ENCODE measurements at regions of chr9 and their contacts with region 1.

Region 1: GRCh38 chr9:33816327-33817252 is at the start of gene UBE2R2:
- DNase-seq: peak; percentile 85
- ATAC-seq: peak; percentile 54
- H3K4me3 ChIP-seq: peak within 1 kb of the TSS; percentile 79
- H3K27ac ChIP-seq: peak within 1 kb of the TSS; percentile 96
- H3K4me1 ChIP-seq: peaks cover 37% of the 10 kb centered on the region
- H3K27me3 ChIP-seq: no peaks in the 10 kb centered on the region
- CTCF ChIP-seq: no peak
- total RNA-seq, gene UBE2R2: 18.4 and 20.9 TPM in 2 replicates

Region 2: GRCh38 chr9:32618261-32618660 is 1198.3 kb before region 1 on chr9:
- CTCF ChIA-PET with region 1: no interaction called
- POLR2A ChIA-PET with region 1: no interaction called
- intact Hi-C with region 1: no loop called
- DNase-seq: no peak
- ATAC-seq: no peak
- H3K4me3 ChIP-seq: no peak overlapping the region
- H3K27ac ChIP-seq: no peak overlapping the region
- H3K4me1 ChIP-seq: no peaks in the 10 kb centered on the region
- H3K27me3 ChIP-seq: peaks cover 33% of the 10 kb centered on the region
- CTCF ChIP-seq: no peak

Region 3: DNA sequence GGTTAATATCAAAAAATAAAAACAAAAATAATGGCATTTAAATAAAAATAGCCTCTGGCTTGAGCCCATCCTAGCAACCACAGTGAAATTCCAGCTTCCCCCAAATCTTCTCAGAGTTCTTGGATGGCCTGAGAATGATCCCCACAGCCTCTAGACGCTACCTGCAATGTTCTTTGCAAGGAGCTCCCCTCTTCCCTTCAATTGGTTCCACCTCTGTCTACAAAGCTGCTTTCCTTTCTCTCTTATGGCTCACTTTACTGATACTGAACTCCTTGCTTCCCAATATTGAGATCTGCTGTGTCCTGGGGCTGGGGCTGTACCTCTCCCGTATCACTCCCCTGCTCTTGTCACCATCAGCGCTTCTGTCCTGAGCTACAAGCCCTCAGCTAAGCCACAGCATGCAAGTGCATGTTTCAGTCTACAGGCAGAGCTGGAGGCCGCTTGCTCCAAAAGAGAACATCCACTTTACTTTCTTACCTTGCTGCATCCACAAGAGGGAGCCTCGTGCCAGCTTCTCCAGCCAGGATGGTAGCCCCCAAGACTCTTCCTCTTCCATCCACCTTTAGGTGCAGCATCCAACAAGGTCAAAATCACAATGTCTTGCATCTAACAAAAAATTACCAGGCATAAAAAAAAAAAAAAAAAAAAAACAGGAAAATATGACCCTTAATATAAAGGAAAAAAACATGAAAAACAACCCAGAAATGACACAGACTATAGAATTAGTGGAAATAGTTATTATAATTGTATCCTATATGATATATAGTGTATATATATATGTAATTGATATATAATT is 78.6 kb before region 1 on chr9:
- CTCF ChIA-PET with region 1: interaction called, 17 read pairs
- POLR2A ChIA-PET with region 1: no interaction called
- intact Hi-C with region 1: loop called (anchors 5 kb)
- DNase-seq: peak; percentile 63
- ATAC-seq: peak; percentile 78
- H3K4me3 ChIP-seq: no peak overlapping the region
- H3K27ac ChIP-seq: peak overlapping the region; percentile 50
- H3K4me1 ChIP-seq: peaks cover 29% of the 10 kb centered on the region
- H3K27me3 ChIP-seq: no peaks in the 10 kb centered on the region
- CTCF ChIP-seq: peak; percentile 71

Region 4: GRCh38 chr9:33800886-33801285 is 15.7 kb before region 1 on chr9:
- CTCF ChIA-PET with region 1: no interaction called
- POLR2A ChIA-PET with region 1: interaction called, 10 read pairs
- intact Hi-C with region 1: no loop called
- DNase-seq: peak; percentile 58
- ATAC-seq: peak; percentile 64
- H3K4me3 ChIP-seq: no peak overlapping the region
- H3K27ac ChIP-seq: no peak overlapping the region
- H3K4me1 ChIP-seq: peaks cover 11% of the 10 kb centered on the region
- H3K27me3 ChIP-seq: no peaks in the 10 kb centered on the region
- CTCF ChIP-seq: no peak

Region 5: GRCh38 chr9:33852216-33852826 is 35.7 kb after region 1 on chr9:
- CTCF ChIA-PET with region 1: interaction called, 10 read pairs
- POLR2A ChIA-PET with region 1: interaction called, 13 read pairs
- intact Hi-C with region 1: loop called (anchors 1 kb)
- DNase-seq: peak; percentile 66
- ATAC-seq: peak; percentile 40
- H3K4me3 ChIP-seq: no peak overlapping the region
- H3K27ac ChIP-seq: no peak overlapping the region
- H3K4me1 ChIP-seq: peaks cover 32% of the 10 kb centered on the region
- H3K27me3 ChIP-seq: no peaks in the 10 kb centered on the region
- CTCF ChIP-seq: peak; percentile 72

Measured in PC-3 (cell line).